ENCODE measurements at regions of chr12 and their contacts with region 1.

Region 1: GRCh38 chr12:59087077-59087673 is 166.9 kb upstream of the LRIG3 start:
- DNase-seq: peak; percentile 38
- H3K4me3 ChIP-seq: no peak overlapping the region
- H3K27ac ChIP-seq: no peak overlapping the region
- H3K4me1 ChIP-seq: no peaks in the 10 kb centered on the region
- H3K27me3 ChIP-seq: no peaks in the 10 kb centered on the region
- CTCF ChIP-seq: peak; percentile 39

Region 2: DNA sequence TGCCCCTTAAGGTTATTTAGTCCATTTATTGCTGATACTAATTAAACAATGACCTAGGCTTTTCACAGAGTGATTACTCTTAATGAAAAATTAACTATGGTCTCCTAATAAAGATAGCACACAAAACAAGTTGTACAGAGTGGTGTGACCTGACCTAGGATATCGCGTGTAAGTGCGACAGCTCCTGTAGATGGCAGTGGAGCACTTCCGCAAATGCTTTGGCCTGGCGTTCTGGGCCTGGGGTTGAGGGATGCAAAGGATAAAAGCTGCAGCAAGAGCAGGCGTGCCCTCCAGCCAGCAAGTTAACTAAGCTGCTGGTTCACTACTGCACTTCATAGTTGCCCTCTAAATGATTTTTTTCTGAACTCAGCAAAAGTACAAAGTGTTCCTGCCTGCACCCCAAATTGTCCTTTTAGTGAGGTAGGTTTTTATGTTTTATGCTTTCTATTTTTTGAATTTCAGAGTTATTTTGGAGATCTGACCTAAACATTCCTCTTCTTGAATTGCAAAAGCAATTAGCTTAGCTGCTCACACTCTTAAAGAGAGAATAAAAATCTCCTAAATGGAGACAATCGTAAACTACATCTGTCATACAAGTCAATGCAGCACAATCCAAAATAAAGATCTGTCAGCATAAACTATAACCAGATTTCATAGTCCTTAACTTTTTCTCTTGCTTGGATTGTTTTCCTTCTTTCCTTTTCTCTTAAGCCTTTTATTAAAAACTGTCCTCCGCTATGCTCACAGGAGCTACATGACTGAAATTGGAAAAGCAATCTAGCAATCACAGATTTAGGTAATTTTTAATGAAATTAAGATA is 546.5 kb before region 1 on chr12:
- intact Hi-C with region 1: loop called (anchors 5 kb)
- DNase-seq: peak; percentile 68
- H3K4me3 ChIP-seq: no peak overlapping the region
- H3K27ac ChIP-seq: no peak overlapping the region
- H3K4me1 ChIP-seq: no peaks in the 10 kb centered on the region
- H3K27me3 ChIP-seq: no peaks in the 10 kb centered on the region
- CTCF ChIP-seq: peak; percentile 60

Region 3: GRCh38 chr12:58919231-58920101 is 167.7 kb before region 1 on chr12:
- intact Hi-C with region 1: loop called (anchors 10 kb)
- DNase-seq: peak; percentile 49
- H3K4me3 ChIP-seq: peak overlapping the region; percentile 79
- H3K27ac ChIP-seq: peak overlapping the region; percentile 97
- H3K4me1 ChIP-seq: no peaks in the 10 kb centered on the region
- H3K27me3 ChIP-seq: no peaks in the 10 kb centered on the region
- CTCF ChIP-seq: no peak

Measured in colonic mucosa (tissue), 4 donors.